ENCODE measurements at regions of chr1 and their contacts with region 1.

Region 1: GRCh38 chr1:75724472-75725022 is at the start of gene ACADM:
- DNase-seq: peak; percentile 81
- H3K4me3 ChIP-seq: peak within 1 kb of the TSS; percentile 87 to 97 (median 90)
- H3K27ac ChIP-seq: peak within 1 kb of the TSS; percentile 67
- H3K4me1 ChIP-seq: no peaks in the 10 kb centered on the region
- H3K27me3 ChIP-seq: no peaks in the 10 kb centered on the region
- CTCF ChIP-seq: no peak
- total RNA-seq, gene ACADM: 24.2 to 24.4 TPM

Region 2: GRCh38 chr1:75765697-75766355 is 41.3 kb after region 1 on chr1:
- CTCF ChIA-PET with region 1: no interaction called
- dilution Hi-C with region 1: loop called (anchors 5 kb)
- in situ Hi-C with region 1: no loop called
- intact Hi-C with region 1: no loop called
- DNase-seq: peak; percentile 62
- H3K4me3 ChIP-seq: no peak overlapping the region
- H3K27ac ChIP-seq: peak overlapping the region; percentile 20
- H3K4me1 ChIP-seq: peaks cover 24% of the 10 kb centered on the region
- H3K27me3 ChIP-seq: no peaks in the 10 kb centered on the region
- CTCF ChIP-seq: no peak

Region 3: GRCh38 chr1:75855010-75855409 is 130.5 kb after region 1 on chr1:
- CTCF ChIA-PET with region 1: no interaction called
- dilution Hi-C with region 1: no loop called
- in situ Hi-C with region 1: no loop called
- intact Hi-C with region 1: loop called (anchors 10 kb)
- DNase-seq: peak; percentile 88
- H3K4me3 ChIP-seq: no peak overlapping the region
- H3K27ac ChIP-seq: peak overlapping the region; percentile 13
- H3K4me1 ChIP-seq: peaks cover 5% of the 10 kb centered on the region
- H3K27me3 ChIP-seq: no peaks in the 10 kb centered on the region
- CTCF ChIP-seq: no peak